ENCODE measurements at regions of chr14 and their contacts with region 1.

Region 1: GRCh38 chr14:60265163-60265562 is 16.1 kb downstream of the PPM1A start:
- DNase-seq: no peak
- ATAC-seq: no peak
- H3K4me3 ChIP-seq: no peak overlapping the region
- H3K27ac ChIP-seq: no peak overlapping the region
- H3K4me1 ChIP-seq: no peaks in the 10 kb centered on the region
- H3K27me3 ChIP-seq: no peaks in the 10 kb centered on the region
- CTCF ChIP-seq: no peak

Region 2: DNA sequence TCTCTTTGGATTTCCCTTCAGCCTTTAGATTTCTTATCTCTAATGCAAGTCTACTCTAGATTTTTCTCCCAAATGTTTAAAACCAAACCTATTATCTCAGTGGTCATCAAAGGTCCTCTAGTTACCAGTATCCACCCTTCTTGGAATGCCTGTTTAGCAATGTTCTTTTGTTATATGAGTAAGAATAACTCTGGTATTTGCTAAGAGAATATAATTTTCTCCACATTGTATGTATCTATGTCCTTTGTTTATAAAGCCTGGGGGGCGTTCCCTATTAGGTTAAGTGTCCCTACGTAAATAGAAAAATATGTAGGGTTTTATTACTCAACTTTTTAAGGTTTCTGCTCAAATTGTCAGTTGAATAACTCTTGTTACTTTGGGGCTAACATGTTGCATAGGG is 11.2 kb after region 1 on chr14:
- CTCF ChIA-PET with region 1: no interaction called
- POLR2A ChIA-PET with region 1: interaction called, 10 read pairs
- in situ Hi-C with region 1: no loop called
- intact Hi-C with region 1: no loop called
- DNase-seq: no peak
- ATAC-seq: no peak
- H3K4me3 ChIP-seq: no peak overlapping the region
- H3K27ac ChIP-seq: no peak overlapping the region
- H3K4me1 ChIP-seq: peaks cover 2% of the 10 kb centered on the region; the same call in 1 of the 2 replicates
- H3K27me3 ChIP-seq: no peaks in the 10 kb centered on the region
- CTCF ChIP-seq: no peak

Measured in Panc1 (cell line).